ENCODE measurements at regions of chr14 and their contacts with region 1.

Region 1: GRCh38 chr14:82153689-82154088 is 620.0 kb upstream of the SEL1L start:
- DNase-seq: no peak
- ATAC-seq: no peak

Region 2: GRCh38 chr14:82126006-82126405 is 27.7 kb before region 1 on chr14:
- intact Hi-C with region 1: no loop called
- DNase-seq: no peak
- ATAC-seq: no peak

Region 3: DNA sequence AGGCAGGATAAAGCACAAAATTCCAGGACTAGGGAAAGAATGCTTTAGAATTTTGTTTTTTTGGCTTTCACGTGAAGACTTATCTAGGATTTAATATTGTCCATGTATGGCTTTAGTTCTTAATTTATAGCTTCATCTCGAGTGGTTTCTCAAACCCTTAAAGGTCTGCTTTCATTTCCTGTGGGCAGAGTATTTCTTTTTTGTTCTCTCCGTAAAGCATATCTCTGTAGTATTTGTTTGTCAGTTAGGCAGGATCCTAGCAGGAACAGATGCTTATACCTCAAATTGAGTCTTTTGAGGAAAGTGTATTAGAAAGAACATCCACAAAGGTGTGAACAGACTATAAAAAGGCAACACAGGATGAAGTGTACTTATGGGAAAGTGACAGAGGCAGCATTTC is 77.1 kb after region 1 on chr14:
- intact Hi-C with region 1: loop called (anchors 2 kb)
- DNase-seq: no peak
- ATAC-seq: no peak

Region 4: DNA sequence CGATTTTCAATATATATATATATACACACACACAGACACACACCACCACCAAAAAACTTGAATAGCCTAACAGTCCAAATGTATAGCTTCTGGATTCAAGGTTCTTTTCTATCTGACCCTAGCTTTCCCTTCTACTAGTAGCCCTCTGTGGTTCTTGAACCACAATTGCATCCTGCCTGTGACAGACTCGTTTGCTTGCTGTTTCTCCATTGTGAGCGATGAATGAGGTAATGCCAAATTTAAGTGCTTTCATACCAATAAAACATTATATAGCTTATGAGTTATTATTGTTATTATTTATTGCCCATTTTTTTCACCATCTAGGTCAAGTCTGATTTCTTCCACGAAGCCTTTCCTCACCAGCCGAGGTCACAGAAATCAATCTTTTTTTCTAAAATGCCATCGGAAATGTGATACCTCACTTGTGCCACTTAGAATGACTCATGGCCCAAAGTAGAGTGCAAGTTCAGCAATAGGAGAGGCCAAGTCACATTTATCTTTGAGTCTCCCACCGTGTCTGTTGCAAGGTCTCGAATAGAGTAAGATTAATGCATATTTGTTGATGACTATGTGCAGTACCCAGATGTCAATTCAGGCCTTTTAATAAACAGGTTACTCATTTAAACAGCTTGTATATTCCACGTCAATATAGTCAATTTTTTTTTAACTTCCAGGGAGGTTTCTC is 395.8 kb after region 1 on chr14:
- intact Hi-C with region 1: no loop called
- DNase-seq: no peak
- ATAC-seq: no peak